ENCODE measurements at regions of chr1 and their contacts with region 1.

Region 1: DNA sequence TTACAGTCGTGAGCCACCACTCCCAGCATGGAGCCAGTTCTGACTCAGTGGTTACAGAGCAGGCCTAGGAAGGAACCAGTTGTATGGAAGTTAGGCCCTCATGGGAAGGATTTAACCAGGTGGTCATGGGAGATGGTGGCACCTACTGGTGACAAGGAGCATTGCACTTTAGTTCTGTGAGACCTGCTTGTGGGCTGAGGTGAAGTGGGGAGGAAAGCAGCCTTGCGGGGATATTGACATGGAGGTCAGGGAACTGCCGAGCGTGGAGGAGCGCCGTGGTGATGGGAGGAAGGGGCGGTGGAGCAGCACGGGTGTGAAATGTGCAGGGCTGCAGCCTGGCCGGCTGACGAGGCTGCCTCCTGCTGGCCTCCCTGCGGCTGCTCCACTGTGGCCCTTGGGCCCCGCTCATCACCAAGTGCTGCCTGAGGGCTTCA is 100.4 kb downstream of the GALNT2 start:
- DNase-seq: peak in 11 of 14 experiments; percentile 9 to 75 (median 14)
- ATAC-seq: peak; percentile 60
- H3K4me3 ChIP-seq: no peak overlapping the region
- H3K4me3 Mint-ChIP-seq: no peak overlapping the region
- H3K27ac ChIP-seq: no peak overlapping the region
- H3K27ac Mint-ChIP-seq: no peak overlapping the region
- H3K4me1 ChIP-seq: peaks cover 9% of the 10 kb centered on the region
- H3K4me1 Mint-ChIP-seq: peaks cover 30% of the 10 kb centered on the region
- H3K27me3 ChIP-seq: no peaks in the 10 kb centered on the region
- H3K27me3 Mint-ChIP-seq: no peaks in the 10 kb centered on the region
- CTCF ChIP-seq: peak; percentile 77

Region 2: GRCh38 chr1:229714964-229715603 is 452.4 kb before region 1 on chr1:
- CTCF ChIA-PET with region 1: no interaction called
- POLR2A ChIA-PET with region 1: no interaction called
- intact Hi-C with region 1: loop called in 1 of 2 experiments (anchors 2 kb)
- DNase-seq: peak in 11 of 14 experiments; percentile 3 to 54 (median 14)
- ATAC-seq: no peak
- H3K4me3 ChIP-seq: no peak overlapping the region
- H3K4me3 Mint-ChIP-seq: no peak overlapping the region
- H3K27ac ChIP-seq: no peak overlapping the region
- H3K27ac Mint-ChIP-seq: no peak overlapping the region
- H3K4me1 ChIP-seq: no peaks in the 10 kb centered on the region
- H3K4me1 Mint-ChIP-seq: no peaks in the 10 kb centered on the region
- H3K27me3 ChIP-seq: peaks cover 0 to under 1% of the 10 kb centered on the region in 2 experiments
- H3K27me3 Mint-ChIP-seq: peaks cover under 1% of the 10 kb centered on the region
- CTCF ChIP-seq: peak; percentile 27

Region 3: GRCh38 chr1:230222678-230223077 is 55.2 kb after region 1 on chr1:
- CTCF ChIA-PET with region 1: no interaction called
- POLR2A ChIA-PET with region 1: no interaction called
- intact Hi-C with region 1: no loop called
- DNase-seq: no peak
- ATAC-seq: no peak
- H3K4me3 ChIP-seq: no peak overlapping the region
- H3K4me3 Mint-ChIP-seq: no peak overlapping the region
- H3K27ac ChIP-seq: no peak overlapping the region
- H3K27ac Mint-ChIP-seq: no peak overlapping the region
- H3K4me1 ChIP-seq: no peaks in the 10 kb centered on the region
- H3K4me1 Mint-ChIP-seq: no peaks in the 10 kb centered on the region
- H3K27me3 ChIP-seq: no peaks in the 10 kb centered on the region
- H3K27me3 Mint-ChIP-seq: no peaks in the 10 kb centered on the region
- CTCF ChIP-seq: no peak

Region 4: GRCh38 chr1:230310381-230311163 is 143.1 kb after region 1 on chr1:
- CTCF ChIA-PET with region 1: no interaction called
- POLR2A ChIA-PET with region 1: no interaction called
- intact Hi-C with region 1: loop called in 1 of 2 experiments (anchors 5 kb)
- DNase-seq: peak; percentile 23 to 83 (median 57)
- ATAC-seq: peak; percentile 59
- H3K4me3 ChIP-seq: no peak overlapping the region
- H3K4me3 Mint-ChIP-seq: no peak overlapping the region
- H3K27ac ChIP-seq: no peak overlapping the region
- H3K27ac Mint-ChIP-seq: no peak overlapping the region
- H3K4me1 ChIP-seq: peaks cover 5% of the 10 kb centered on the region
- H3K4me1 Mint-ChIP-seq: peaks cover 4% of the 10 kb centered on the region
- H3K27me3 ChIP-seq: no peaks in the 10 kb centered on the region
- H3K27me3 Mint-ChIP-seq: no peaks in the 10 kb centered on the region
- CTCF ChIP-seq: peak; percentile 98

Measured in CD4-positive, alpha-beta T cell (primary cell).